ENCODE measurements at regions of chr13 and their contacts with region 1.

Region 1: DNA sequence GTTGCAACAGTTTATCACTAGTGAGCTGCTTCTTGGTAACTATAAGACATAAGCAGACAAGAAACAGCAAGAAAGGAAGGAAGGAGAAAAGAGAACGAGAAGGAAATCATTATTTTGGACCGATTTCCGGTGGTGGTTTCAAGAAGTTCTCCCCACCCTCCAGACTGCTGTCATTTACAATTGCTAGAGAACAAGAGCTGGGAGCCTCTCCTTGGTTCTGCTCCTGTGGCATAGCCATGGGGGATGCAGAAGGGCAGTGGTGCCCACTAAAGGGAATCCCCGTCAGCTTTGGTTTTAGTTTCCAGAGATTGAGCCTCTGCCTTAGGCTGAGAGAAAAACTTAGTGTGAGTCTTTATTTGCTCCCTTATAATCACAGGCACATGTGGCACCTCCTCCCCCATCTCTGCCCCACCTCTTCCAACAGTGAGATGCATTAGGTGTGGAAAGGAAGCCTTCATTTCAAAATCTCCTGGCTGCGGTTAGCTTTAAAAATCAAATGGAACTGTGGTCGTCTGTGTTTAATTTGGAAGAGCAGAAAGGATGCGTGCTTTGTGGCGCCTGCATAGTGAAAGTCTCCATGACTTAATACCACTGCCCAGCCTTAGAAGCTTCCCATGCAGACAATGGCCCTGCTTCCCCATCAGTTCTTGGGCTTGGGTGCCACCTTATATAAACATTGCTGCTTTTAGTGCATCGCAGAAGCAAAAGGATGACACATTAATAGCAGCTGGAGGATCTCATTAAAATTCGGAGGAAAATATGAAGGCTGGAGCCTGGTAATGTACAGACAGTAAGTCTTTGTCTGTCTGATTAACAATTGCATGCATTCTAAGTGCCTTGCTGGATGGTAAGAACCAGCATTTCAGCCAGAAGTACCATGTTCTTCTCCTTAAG is 25.0 kb downstream of the LRCH1 start:
- DNase-seq: no peak
- H3K4me3 Mint-ChIP-seq: no peak overlapping the region
- H3K27ac Mint-ChIP-seq: peak overlapping the region; percentile 10
- H3K4me1 Mint-ChIP-seq: peaks cover 53% of the 10 kb centered on the region
- H3K27me3 Mint-ChIP-seq: no peaks in the 10 kb centered on the region

Region 2: DNA sequence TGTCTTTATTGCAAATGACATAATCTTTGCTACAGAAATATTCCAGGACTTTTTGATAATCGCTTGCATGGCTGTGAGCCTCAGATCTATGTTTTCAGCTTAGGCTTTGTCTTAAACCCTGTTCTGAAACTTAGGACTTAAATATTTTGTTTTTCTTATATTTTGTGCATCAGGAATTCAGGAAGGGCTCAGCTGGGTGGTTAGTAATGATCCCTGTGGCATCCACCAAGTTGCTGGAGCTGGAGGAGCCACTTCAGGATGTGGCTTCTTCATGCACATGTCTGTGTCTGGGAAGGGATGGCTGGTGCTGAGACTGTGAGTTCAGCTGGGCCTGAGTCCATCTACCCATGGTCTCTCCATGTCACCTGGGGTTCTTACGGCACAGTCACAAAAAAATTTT is 73.9 kb before region 1 on chr13:
- intact Hi-C with region 1: no loop called
- DNase-seq: no peak
- H3K4me3 Mint-ChIP-seq: no peak overlapping the region
- H3K27ac Mint-ChIP-seq: no peak overlapping the region
- H3K4me1 Mint-ChIP-seq: no peaks in the 10 kb centered on the region
- H3K27me3 Mint-ChIP-seq: peaks cover 28% of the 10 kb centered on the region

Region 3: DNA sequence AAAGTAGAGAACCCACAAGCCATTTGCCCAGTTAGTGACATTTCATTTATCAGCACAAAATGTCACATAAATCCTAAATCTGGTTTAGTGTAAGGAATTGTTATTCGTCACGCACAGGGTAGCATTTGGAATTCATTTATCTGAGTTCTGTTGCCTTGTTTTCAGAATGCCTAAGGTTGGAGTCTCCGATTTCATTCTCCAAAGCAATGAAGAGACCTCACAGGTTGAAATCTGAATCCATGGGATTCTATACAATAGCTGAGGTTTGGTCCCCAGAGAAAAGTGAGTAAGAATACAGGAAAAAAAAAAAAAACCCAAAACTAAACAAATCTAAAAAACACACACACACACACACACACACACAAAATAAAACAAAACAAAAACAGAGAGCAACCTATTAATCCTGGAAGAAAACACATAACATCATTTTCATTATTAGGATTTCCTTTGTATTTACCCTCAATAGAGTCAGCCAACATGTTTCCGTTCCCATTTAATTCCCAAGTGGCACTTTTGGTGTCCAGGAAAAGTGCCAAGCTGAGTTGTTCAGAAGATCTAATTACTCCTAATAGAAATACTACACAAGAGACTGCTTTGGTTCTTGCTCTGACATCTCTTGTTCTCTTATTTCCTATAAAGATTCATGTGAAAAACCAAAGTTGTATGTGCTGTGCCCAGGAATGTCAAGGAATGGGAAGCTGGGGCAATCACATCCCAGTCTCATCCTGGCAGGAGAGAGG is 61.2 kb before region 1 on chr13:
- intact Hi-C with region 1: loop called (anchors 2 kb)
- DNase-seq: no peak
- H3K4me3 Mint-ChIP-seq: no peak overlapping the region
- H3K27ac Mint-ChIP-seq: no peak overlapping the region
- H3K4me1 Mint-ChIP-seq: peaks cover 6% of the 10 kb centered on the region
- H3K27me3 Mint-ChIP-seq: peaks cover 52% of the 10 kb centered on the region

Region 4: DNA sequence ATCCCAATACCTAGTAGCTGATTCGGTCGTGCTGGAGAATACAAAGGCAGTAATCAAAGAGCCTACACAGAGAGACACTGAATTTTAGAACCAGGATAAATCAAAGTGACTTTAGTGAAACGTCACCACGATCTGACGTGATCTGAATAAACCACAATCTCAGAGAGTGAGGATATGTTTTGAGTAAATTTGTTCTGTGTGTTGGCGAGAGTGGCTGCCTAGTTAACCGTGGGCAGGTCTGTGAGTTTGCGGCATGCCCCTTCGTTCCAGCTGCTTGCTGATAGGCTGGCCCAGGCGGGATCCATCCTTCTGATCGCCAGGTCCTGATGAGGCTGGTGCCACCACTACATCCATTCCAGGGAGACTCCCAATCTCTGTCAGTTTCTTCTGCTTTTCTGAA is 15.5 kb after region 1 on chr13:
- intact Hi-C with region 1: loop called (anchors 2 kb)
- DNase-seq: peak; percentile 15
- H3K4me3 Mint-ChIP-seq: no peak overlapping the region
- H3K27ac Mint-ChIP-seq: peak overlapping the region; percentile 3
- H3K4me1 Mint-ChIP-seq: peaks cover 51% of the 10 kb centered on the region
- H3K27me3 Mint-ChIP-seq: peaks cover 6% of the 10 kb centered on the region

Measured in activated T-helper 2 cell treated with anti-CD3 and anti-CD28 coated beads, Interferon-gamma antibody, Interleukin-2, Interleukin-4, amounts not matched to agents 10 μg/mL and 5 μg/mL and 100 μg/mL, durations not matched to agents 14 hours and 24 hours and 36 hours (primary cell).